ENCODE measurements at regions of chr19 and their contacts with region 1.

Region 1: DNA sequence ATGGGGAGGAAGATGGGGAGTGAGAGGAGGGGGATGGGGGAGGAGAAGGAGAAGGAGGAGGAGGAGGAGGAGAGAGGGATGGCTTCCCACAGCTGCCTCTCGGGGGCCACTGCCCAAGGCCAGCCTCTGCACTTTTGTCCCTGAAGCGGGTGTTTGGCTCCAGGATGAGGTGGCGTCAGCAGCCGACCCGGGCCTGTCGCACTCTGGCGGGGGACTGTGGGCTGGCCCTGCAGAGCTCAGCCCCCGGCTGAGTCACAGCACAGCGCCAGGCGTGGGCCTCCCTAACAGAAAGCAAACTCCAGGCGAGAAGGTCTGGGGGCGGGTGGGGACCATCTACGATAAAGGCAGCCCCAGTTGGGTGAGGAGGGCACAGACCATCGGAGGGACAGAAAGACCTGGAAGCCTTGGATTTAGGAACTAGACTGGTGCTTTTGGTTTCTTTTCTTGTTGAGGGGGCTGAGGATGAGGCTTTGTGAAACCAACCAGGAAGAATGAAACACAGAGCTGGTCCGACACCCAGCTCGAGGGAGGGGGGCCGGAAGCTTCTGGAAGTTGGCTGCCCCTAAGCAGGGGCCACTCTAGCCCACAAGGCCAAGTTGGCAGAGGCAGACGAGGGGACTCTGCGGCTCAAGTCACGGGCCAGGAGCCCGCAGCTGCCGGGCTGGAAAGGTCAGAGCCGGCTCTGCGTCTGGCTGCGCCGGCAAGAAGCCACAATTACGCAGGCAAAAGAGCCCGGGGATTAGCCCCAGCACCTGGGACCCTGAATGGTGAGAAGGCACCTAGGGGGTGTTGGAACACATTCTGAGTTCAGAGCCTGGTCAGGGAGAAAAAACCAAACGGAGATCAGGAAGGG is 18.2 kb downstream of the LSM4 start:
- DNase-seq: peak; percentile 66 to 92 (median 76)
- ATAC-seq: peak; percentile 70 to 76
- H3K4me3 Mint-ChIP-seq: peak overlapping the region; percentile 84 to 96 (median 93)
- H3K27ac Mint-ChIP-seq: peak overlapping the region; percentile 97 to 100 (median 98)
- H3K4me1 Mint-ChIP-seq: peaks cover 23 to 54% (median 48%) of the 10 kb centered on the region in 4 donors
- H3K27me3 Mint-ChIP-seq: no peaks in the 10 kb centered on the region

Region 2: DNA sequence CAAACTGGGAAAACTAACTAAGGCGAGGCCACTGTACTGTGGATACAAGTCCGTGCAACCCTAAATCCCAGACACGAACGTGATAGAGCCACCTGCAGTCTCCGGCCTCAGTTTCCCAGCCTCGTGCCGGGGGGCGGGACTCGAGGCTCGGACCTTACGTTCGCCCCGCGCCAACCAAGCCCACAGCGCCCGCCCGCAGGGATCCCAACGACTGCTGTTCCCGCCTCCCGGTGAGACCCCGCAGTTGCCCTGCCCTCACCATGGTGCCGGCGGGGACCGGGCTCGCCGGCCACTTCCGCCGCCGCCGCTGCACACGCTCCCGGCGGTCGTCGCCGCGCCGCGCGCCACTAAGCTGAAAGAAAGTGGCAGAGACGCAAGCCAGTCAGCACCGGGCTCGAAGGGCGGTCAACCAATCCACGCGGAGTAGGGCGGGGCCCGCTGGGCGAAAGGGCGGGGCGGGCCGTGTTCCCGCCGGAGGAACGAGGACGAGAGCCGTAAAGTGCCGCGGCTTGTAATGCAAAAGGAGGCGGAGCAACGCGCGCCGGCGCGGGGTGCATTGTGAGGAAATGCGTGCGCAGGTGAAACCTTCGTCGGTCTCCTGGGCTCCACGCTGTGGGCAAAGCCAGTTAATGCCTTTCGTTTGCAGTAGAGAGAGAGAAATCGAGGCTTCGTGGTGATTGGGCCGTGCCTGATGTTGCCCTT is 18.2 kb after region 1 on chr19 and contains the start of gene LSM4:
- POLR2A ChIA-PET with region 1: interaction called, 106 read pairs
- DNase-seq: peak; percentile 95 to 100 (median 99)
- ATAC-seq: peak; percentile 92 to 93
- H3K4me3 Mint-ChIP-seq: peak within 1 kb of the TSS; percentile 81 to 90 (median 86)
- H3K27ac Mint-ChIP-seq: peak within 1 kb of the TSS; percentile 89 to 98 (median 98)
- H3K4me1 Mint-ChIP-seq: peaks cover 29 to 59% (median 56%) of the 10 kb centered on the region in 4 donors
- H3K27me3 Mint-ChIP-seq: no peaks in the 10 kb centered on the region
- polyA plus RNA-seq, gene LSM4: 162 to 198 (median 181) TPM

Region 3: DNA sequence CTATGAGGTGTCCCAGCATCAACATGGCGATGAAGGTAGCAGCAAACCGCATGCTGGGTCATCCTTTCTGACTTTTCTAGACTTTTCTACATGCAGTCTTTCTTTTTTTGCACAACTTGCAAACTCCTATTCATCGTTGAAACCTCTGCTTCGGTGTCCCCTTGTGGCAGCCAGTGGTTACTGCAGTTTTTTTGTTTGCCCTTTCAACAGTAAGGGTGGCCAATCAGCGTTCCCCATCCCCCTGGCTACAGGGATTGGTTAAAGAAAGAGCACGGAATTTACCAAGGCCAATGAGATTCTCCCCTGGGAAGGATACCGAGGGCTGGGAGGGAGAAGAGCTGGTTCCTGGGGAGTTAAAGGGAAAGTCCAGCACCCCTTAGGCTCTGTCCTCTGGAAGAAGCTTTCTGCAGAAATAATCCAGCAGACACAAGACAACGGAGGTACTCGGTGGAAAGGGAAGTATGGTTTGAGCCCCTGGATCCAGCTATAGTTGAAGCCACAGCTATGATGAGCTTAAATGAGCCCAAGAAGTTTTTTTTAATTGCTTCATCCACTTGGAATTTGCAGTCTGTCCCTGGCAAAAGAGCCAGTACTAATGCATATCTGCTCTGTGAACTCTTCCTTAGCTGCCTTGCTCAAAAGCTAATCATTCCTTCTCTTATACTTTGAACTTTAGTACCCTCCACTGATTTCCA is 23.8 kb after region 1 on chr19:
- POLR2A ChIA-PET with region 1: interaction called, 35 read pairs
- DNase-seq: peak; percentile 62 to 95 (median 87)
- ATAC-seq: peak; percentile 98 to 100
- H3K4me3 Mint-ChIP-seq: peak overlapping the region; percentile 53 to 84 (median 68)
- H3K27ac Mint-ChIP-seq: peak overlapping the region in 8 of 10 donors; percentile 6 to 92 (median 76)
- H3K4me1 Mint-ChIP-seq: peaks cover 6 to 23% (median 21%) of the 10 kb centered on the region in 4 donors
- H3K27me3 Mint-ChIP-seq: no peaks in the 10 kb centered on the region

Region 4: DNA sequence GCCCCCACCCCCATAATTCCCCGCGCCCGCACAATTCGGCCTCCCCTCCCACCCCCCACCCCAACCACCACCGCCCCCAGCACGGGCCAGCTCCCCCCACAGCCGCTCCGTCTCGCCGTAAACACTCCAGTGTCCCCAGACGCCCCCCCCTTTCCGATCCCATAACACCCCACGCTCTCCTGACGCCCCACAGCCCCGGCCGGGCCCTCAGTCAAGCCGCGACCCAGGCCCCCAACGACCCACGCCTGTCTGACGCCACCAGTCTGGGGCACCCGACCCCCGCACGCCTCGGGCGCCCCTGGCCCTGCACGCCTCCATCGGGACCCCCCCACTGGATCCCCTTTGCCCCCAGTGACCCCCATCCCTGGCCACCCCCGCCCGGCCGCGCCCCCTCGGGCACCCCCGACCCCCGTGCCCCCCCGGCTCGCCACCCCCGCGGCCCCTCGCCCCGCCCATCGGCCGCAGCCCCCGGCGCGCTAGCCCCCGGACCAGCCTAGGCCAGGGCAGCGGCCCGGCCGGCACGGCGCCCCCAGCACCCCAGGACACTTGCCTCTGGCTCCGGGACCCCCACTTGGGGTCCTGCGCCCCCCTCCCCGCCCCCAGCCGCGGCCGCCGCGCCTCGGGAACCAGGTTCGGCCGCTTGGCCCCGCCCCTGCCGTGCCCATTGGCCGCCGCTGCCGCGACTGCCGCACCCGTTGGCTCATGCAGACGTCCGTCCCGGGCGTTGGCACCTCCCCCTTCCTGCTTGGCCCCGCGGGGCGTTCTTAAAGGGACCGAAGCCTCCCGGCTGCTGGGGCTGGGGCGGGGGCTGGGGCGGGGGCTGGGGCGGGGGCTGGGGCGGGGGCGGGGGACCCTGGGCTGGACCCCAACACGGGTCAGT is 238.5 kb after region 1 on chr19 and contains the start of gene FKBP8:
- POLR2A ChIA-PET with region 1: no interaction called
- DNase-seq: peak; percentile 85 to 96 (median 91)
- ATAC-seq: peak; percentile 98
- H3K4me3 Mint-ChIP-seq: peak within 1 kb of the TSS; percentile 86 to 94 (median 92)
- H3K27ac Mint-ChIP-seq: peak within 1 kb of the TSS; percentile 90 to 98 (median 95)
- H3K4me1 Mint-ChIP-seq: peaks cover 7 to 36% (median 30%) of the 10 kb centered on the region in 4 donors
- H3K27me3 Mint-ChIP-seq: no peaks in the 10 kb centered on the region
- polyA plus RNA-seq, gene FKBP8: 87.0 to 125 (median 106) TPM

Measured in naive thymus-derived CD8-positive, alpha-beta T cell (primary cell).